Sciatic nerve (tissue), 2 donors: ENCODE measurements at regions of chr1 and their contacts with region 1.

Region 1: DNA sequence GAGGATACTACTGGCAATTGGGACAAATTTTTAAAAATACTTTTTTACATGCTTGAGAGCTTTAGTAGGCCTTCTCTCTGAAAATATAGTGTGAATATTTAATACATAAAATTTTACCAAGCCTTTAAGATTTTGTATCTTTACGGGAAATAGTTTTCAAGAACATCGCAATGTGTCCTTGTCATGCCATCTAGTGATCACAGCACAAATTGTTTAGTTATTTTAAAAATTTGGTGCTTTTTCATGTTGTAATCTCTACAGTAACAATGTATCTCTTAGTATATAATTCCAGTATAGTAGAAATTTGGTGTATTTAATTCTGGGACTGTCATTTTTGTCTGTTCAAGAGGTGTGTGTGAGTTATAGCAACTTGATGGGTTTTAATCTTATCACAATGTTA is 6.7 kb downstream of the CDC7 start:
- DNase-seq: no peak
- ATAC-seq: no peak

Region 2: GRCh38 chr1:91929250-91929649 is 421.9 kb after region 1 on chr1:
- intact Hi-C with region 1: loop called (anchors 5 kb)
- DNase-seq: no peak
- ATAC-seq: peak; percentile 63